Heart left ventricle (tissue), 16 donors: ENCODE measurements at regions of chr19 and their contacts with region 1.

Region 1: DNA sequence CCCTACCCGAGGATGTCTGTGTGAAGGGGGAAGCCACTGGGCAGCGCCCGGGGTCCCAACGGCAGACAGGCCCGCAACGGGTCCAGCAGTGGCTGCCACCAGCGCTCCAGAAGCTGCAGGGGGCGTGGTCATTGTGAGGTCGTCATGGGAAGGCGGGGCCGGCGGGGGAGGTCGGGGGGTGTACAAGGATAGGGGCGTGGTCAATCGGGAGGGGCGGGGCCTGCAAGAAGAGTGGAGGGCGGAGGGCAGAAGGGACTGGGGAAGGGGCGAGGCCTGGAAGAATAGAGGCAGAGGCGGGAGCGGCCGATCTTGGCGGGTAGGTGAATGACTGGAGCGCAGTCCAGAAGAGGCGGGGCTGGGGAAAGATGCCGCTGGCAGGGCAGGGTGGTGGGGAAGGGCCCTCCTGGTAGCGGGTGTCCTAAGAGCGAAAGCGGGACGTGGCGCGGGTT is 4.4 kb downstream of the FUZ start:
- DNase-seq: peak; percentile 94 to 97 (median 95)
- ATAC-seq: peak; percentile 39 to 78 (median 77)
- H3K4me3 ChIP-seq: peak overlapping the region; percentile 60 to 99 (median 74)
- H3K27ac ChIP-seq: peak overlapping the region; percentile 72 to 90 (median 88)
- H3K4me1 ChIP-seq: peaks cover 0 to 37% (median 18%) of the 10 kb centered on the region in 12 donors
- H3K27me3 ChIP-seq: no peaks in the 10 kb centered on the region
- CTCF ChIP-seq: no peak
- POLR2A ChIP-seq: peak in 1 of 2 donors; percentile 41

Region 2: GRCh38 chr19:49773669-49774350 is 34.9 kb before region 1 on chr19:
- intact Hi-C with region 1: loop called in 6 of 10 experiments (anchors 5 kb)
- DNase-seq: no peak
- ATAC-seq: no peak
- H3K4me3 ChIP-seq: no peak overlapping the region
- H3K27ac ChIP-seq: no peak overlapping the region
- H3K4me1 ChIP-seq: peaks cover 0 to 15% (median 6%) of the 10 kb centered on the region in 12 donors
- H3K27me3 ChIP-seq: no peaks in the 10 kb centered on the region
- CTCF ChIP-seq: no peak
- POLR2A ChIP-seq: no peak